CD4-positive, alpha-beta T cell (primary cell): ENCODE measurements at regions of chr12 and their contacts with region 1.

Region 1: DNA sequence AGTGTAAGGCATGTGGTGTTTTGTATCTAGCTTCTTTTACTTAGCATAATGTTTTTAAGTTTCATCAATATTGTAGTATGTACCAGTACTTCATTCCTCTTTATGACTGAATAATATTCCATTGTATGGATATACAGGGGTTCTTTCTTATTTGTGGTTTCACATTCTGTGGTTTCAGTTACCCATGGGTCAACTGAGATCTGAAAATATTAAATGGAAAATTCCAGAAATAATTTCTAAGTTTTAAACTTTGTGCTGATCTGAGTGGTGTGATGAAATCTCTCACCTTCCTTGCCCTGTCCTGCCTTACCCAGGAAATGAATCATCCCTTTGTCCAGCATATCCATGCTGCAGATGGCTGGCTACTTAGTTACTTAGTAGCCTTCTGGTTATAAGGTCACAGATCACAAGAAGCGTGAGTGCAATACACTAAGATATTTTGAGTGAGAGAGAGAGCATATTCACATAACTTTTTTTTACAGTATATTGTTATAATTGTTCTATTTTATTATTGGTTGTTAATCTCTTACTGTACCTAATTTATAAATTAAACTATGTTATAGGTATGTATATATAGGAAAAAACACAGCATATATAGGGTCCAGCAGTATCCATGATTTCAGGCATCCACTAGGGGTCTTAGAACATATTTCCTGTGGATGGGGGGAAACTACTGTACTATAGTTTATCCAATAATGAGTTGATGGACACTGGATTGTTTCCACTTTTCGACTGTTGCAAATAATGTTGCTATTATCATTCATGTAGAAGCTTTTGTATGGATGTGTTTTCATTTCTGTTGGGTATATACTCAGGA is 59.6 kb upstream of the LRTM2 start:
- DNase-seq: no peak
- ATAC-seq: no peak
- H3K4me3 ChIP-seq: no peak overlapping the region
- H3K4me3 Mint-ChIP-seq: no peak overlapping the region
- H3K27ac ChIP-seq: no peak overlapping the region
- H3K27ac Mint-ChIP-seq: no peak overlapping the region
- H3K4me1 ChIP-seq: no peaks in the 10 kb centered on the region
- H3K4me1 Mint-ChIP-seq: peaks cover 20% of the 10 kb centered on the region
- H3K27me3 ChIP-seq: no peaks in the 10 kb centered on the region
- H3K27me3 Mint-ChIP-seq: no peaks in the 10 kb centered on the region
- CTCF ChIP-seq: no peak

Region 2: DNA sequence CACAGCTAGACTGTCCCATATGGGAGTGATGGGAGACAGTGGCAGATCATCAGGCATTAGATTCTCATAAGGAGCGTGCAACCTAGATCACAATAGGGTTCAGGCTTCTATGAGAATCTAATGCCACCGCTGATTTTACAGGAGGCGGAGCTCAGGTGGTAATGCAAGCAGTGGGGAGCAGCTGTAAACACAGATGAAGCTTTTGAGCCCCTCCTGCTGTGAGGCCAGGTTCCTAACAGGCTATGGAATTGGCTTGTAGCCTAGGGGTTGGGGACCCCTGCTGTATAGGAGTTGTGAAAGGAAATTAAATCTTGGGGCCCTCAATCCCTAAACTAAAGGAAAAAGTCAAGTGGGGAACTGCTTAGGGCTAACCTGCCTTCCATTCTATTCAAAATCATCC is 40.3 kb before region 1 on chr12:
- CTCF ChIA-PET with region 1: no interaction called
- POLR2A ChIA-PET with region 1: no interaction called
- intact Hi-C with region 1: loop called in 1 of 2 experiments (anchors 5 kb)
- DNase-seq: no peak
- ATAC-seq: no peak
- H3K4me3 ChIP-seq: no peak overlapping the region
- H3K4me3 Mint-ChIP-seq: no peak overlapping the region
- H3K27ac ChIP-seq: no peak overlapping the region
- H3K27ac Mint-ChIP-seq: no peak overlapping the region
- H3K4me1 ChIP-seq: no peaks in the 10 kb centered on the region
- H3K4me1 Mint-ChIP-seq: peaks cover 61% of the 10 kb centered on the region
- H3K27me3 ChIP-seq: no peaks in the 10 kb centered on the region
- H3K27me3 Mint-ChIP-seq: no peaks in the 10 kb centered on the region
- CTCF ChIP-seq: no peak

Region 3: GRCh38 chr12:2194060-2194459 is 433.3 kb after region 1 on chr12:
- CTCF ChIA-PET with region 1: no interaction called
- POLR2A ChIA-PET with region 1: no interaction called
- intact Hi-C with region 1: no loop called
- DNase-seq: no peak
- ATAC-seq: no peak
- H3K4me3 ChIP-seq: no peak overlapping the region
- H3K4me3 Mint-ChIP-seq: no peak overlapping the region
- H3K27ac ChIP-seq: no peak overlapping the region
- H3K27ac Mint-ChIP-seq: no peak overlapping the region
- H3K4me1 ChIP-seq: no peaks in the 10 kb centered on the region
- H3K4me1 Mint-ChIP-seq: no peaks in the 10 kb centered on the region
- H3K27me3 ChIP-seq: no peaks in the 10 kb centered on the region
- H3K27me3 Mint-ChIP-seq: no peaks in the 10 kb centered on the region
- CTCF ChIP-seq: no peak